ENCODE measurements at regions of chr19 and their contacts with region 1.

Region 1: GRCh38 chr19:19361075-19361594 is 40.5 kb downstream of the MAU2 start:
- DNase-seq: peak; percentile 87
- ATAC-seq: peak; percentile 77
- H3K4me3 ChIP-seq: no peak overlapping the region
- H3K27ac ChIP-seq: no peak overlapping the region
- H3K4me1 ChIP-seq: 0 out of 2 replicates have a peak, but pooled peaks cover 5% of the 10 kb centered on the region
- H3K27me3 ChIP-seq: no peaks in the 10 kb centered on the region
- CTCF ChIP-seq: peak; percentile 73

Region 2: DNA sequence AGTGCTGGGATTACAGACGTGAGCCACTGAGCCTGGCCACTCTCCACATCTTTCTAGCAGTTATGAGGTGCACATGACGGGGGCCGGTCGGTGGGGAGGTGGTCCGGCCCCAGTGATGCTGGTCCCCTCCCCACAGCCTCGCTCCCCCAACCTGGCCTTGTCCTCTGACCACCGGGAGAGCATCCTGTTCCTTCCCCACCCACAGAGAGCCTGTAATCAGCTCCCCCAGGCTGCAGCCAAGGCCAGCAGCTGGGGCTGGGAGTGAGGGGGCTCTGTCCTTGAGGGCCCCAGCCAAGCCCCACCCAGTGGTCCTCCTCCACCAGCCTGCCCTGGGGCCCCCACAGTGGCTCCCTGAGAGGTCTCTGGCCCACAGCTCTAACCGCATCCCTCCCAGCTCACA is 1536.8 kb before region 1 on chr19:
- CTCF ChIA-PET with region 1: no interaction called
- POLR2A ChIA-PET with region 1: no interaction called
- intact Hi-C with region 1: no loop called
- DNase-seq: no peak
- ATAC-seq: no peak
- H3K4me3 ChIP-seq: no peak overlapping the region
- H3K27ac ChIP-seq: no peak overlapping the region
- H3K4me1 ChIP-seq: no peaks in the 10 kb centered on the region
- H3K27me3 ChIP-seq: no peaks in the 10 kb centered on the region
- CTCF ChIP-seq: no peak

Region 3: DNA sequence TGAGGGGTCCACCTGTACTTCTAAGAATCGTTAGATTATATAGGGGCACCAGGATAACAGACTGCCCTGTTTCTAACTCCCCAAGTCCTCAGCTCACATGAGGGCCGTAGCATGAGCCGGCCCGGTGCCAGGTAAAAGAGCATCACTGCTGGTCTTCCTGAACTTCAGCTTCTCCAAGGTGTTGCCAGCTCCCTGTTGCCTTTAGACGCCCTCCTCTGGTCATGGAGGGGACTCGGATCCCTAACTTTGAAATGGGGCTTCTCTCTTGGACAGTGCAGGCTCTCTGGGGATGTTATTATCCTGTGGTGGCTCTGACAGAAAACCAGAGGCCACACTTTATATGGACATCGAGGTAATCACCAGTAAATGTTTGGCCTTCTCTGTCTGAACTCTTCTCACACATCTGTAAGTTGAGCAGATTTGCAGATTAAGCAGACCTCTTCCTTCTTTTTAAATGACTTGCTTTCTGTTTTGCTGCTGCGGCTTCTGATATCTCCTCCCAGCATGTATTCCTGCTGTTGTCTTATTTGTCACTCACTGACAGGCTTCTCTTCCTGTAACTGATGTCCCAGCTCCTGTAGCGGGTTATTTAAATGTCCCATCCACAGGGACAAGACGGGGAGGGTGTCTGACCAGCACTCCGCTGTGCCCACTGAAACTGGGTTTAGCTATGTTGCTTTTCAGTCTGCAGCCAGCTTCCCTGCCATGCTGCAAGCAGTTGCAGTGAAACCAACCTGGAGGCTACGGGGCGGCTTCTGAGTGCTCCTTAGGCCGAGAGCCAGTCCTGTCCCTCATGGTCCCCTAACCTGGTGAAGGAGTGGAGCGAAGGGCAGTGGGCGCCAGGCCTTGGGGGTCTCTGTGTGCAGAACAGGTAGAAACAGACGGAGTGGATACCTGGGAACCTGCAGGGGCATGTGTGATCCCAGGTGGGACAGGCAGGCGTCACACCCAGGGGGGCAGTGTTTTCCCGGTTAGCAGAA is 115.0 kb after region 1 on chr19:
- CTCF ChIA-PET with region 1: no interaction called
- POLR2A ChIA-PET with region 1: no interaction called
- intact Hi-C with region 1: loop called (anchors 5 kb)
- DNase-seq: peak; percentile 36
- ATAC-seq: peak; percentile 23; the same call in 1 of the 2 replicates
- H3K4me3 ChIP-seq: no peak overlapping the region
- H3K27ac ChIP-seq: no peak overlapping the region
- H3K4me1 ChIP-seq: peaks cover 21% of the 10 kb centered on the region
- H3K27me3 ChIP-seq: no peaks in the 10 kb centered on the region
- CTCF ChIP-seq: peak; percentile 59